ENCODE measurements at regions of chr7 and their contacts with region 1.

Region 1: GRCh38 chr7:54995631-54996340 is 23.0 kb upstream of the EGFR start:
- DNase-seq: peak; percentile 84
- ATAC-seq: peak; percentile 95
- H3K4me3 ChIP-seq: no peak overlapping the region
- H3K27ac ChIP-seq: peak overlapping the region; percentile 12
- H3K4me1 ChIP-seq: peaks cover 12% of the 10 kb centered on the region
- H3K27me3 ChIP-seq: no peaks in the 10 kb centered on the region
- CTCF ChIP-seq: no peak

Region 2: GRCh38 chr7:54874804-54875203 is 121.0 kb before region 1 on chr7:
- CTCF ChIA-PET with region 1: no interaction called
- POLR2A ChIA-PET with region 1: interaction called, 27 read pairs
- in situ Hi-C with region 1: no loop called
- intact Hi-C with region 1: no loop called
- DNase-seq: no peak
- ATAC-seq: no peak
- H3K4me3 ChIP-seq: no peak overlapping the region
- H3K27ac ChIP-seq: no peak overlapping the region
- H3K4me1 ChIP-seq: no peaks in the 10 kb centered on the region
- H3K27me3 ChIP-seq: no peaks in the 10 kb centered on the region
- CTCF ChIP-seq: no peak